Endothelial cell of umbilical vein (primary cell): ENCODE measurements at regions of chr11 and their contacts with region 1.

Region 1: GRCh38 chr11:69131644-69132300 is 24.0 kb upstream of the SMIM38 start:
- DNase-seq: peak; percentile 69
- H3K4me3 ChIP-seq: no peak overlapping the region
- H3K27ac ChIP-seq: no peak overlapping the region
- H3K4me1 ChIP-seq: no peaks in the 10 kb centered on the region
- H3K27me3 ChIP-seq: no peaks in the 10 kb centered on the region
- CTCF ChIP-seq: peak; percentile 65 to 89
- POLR2A ChIP-seq: no peak

Region 2: DNA sequence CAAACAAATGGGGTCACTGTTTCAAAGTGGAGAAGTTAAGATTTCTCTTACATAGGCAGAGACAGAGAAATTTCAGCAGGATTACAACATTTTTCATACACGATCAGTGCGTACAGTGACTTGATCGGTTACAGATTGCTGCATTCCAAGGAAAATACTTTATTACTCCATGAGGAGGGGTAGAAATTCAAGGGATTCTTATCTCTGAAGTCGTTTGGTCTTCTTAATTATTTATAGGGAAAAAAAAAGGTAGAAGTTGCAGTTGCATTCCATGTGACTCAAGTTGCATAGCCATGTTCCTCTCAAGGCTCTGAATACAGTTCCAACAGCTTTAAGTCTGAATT is 13.3 kb after region 1 on chr11:
- CTCF ChIA-PET with region 1: interaction called, 20 read pairs
- POLR2A ChIA-PET with region 1: no interaction called
- dilution Hi-C with region 1: no loop called
- intact Hi-C with region 1: no loop called
- DNase-seq: no peak
- H3K4me3 ChIP-seq: no peak overlapping the region
- H3K27ac ChIP-seq: no peak overlapping the region
- H3K4me1 ChIP-seq: no peaks in the 10 kb centered on the region
- H3K27me3 ChIP-seq: peaks cover 7 to 19% of the 10 kb centered on the region in 2 experiments
- CTCF ChIP-seq: no peak
- POLR2A ChIP-seq: no peak

Region 3: DNA sequence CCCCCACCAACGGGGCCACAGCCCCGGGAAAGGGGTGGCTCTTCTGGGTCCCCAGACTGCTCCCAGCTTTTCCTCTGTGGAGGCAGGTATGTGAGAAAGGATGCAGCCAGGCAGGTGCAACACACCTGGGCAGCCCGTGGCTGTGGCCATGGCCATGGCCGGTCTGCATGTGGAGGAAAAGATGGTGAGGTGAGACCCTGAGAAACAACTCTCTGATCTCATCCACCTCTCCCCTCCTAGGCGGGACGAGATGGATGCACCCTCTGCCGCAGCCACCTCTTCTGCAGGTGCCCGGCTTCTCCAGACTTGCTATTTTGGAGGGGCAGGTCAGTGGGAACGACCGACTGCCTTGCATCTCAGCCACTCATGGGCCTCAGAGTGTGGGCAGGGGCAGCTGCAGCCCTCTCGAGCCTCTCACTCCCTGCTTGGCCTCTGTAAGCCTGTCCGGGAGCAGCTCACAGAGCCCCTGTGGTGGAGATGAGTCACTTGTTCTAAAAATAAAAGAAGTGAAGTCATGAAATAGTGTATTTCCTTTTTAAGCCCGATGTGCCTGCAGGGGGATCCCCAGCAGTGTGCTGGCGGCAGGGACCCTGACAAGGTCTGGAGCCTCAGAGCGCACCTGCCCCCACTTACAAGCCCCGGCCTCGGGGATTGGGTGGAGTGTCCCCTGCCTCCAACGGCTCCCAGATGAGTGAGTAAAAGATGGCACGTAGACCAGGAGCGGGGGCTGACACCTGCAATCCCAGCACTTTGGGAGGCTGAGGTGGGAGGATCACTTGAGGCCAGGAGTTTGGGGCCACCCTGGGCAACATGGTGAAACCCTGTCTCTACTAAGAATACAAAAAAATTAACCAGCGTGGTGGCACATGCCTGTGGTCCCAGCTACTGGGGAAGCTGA is 34.7 kb after region 1 on chr11:
- CTCF ChIA-PET with region 1: interaction called, 11 read pairs
- POLR2A ChIA-PET with region 1: no interaction called
- dilution Hi-C with region 1: no loop called
- intact Hi-C with region 1: no loop called
- DNase-seq: peak; percentile 76
- H3K4me3 ChIP-seq: no peak overlapping the region
- H3K27ac ChIP-seq: no peak overlapping the region
- H3K4me1 ChIP-seq: peaks cover 7% of the 10 kb centered on the region
- H3K27me3 ChIP-seq: peaks cover 2 to 4% of the 10 kb centered on the region in 2 experiments
- CTCF ChIP-seq: peak in 1 of 2 donors; percentile 31
- POLR2A ChIP-seq: no peak

Region 4: GRCh38 chr11:69296890-69297786 is 165.4 kb after region 1 on chr11:
- CTCF ChIA-PET with region 1: interaction called, 30 read pairs
- POLR2A ChIA-PET with region 1: no interaction called
- dilution Hi-C with region 1: no loop called
- intact Hi-C with region 1: loop called (anchors 1 kb)
- DNase-seq: peak; percentile 98
- H3K4me3 ChIP-seq: peak overlapping the region in 1 of 3 experiments; percentile 29
- H3K27ac ChIP-seq: peak overlapping the region; percentile 98
- H3K4me1 ChIP-seq: peaks cover 63% of the 10 kb centered on the region
- H3K27me3 ChIP-seq: no peaks in the 10 kb centered on the region
- CTCF ChIP-seq: no peak
- POLR2A ChIP-seq: no peak

Region 5: GRCh38 chr11:69449320-69450063 is 317.7 kb after region 1 on chr11:
- CTCF ChIA-PET with region 1: interaction called, 10 read pairs
- POLR2A ChIA-PET with region 1: no interaction called
- dilution Hi-C with region 1: no loop called
- intact Hi-C with region 1: no loop called
- DNase-seq: peak; percentile 92
- H3K4me3 ChIP-seq: no peak overlapping the region
- H3K27ac ChIP-seq: peak overlapping the region; percentile 98
- H3K4me1 ChIP-seq: peaks cover 38% of the 10 kb centered on the region
- H3K27me3 ChIP-seq: no peaks in the 10 kb centered on the region
- CTCF ChIP-seq: no peak
- POLR2A ChIP-seq: peak; percentile 84

Region 6: GRCh38 chr11:69588270-69588669 is 456.5 kb after region 1 on chr11:
- CTCF ChIA-PET with region 1: interaction called, 11 read pairs
- POLR2A ChIA-PET with region 1: interaction called, 4 read pairs
- dilution Hi-C with region 1: no loop called
- intact Hi-C with region 1: no loop called
- DNase-seq: peak; percentile 50
- H3K4me3 ChIP-seq: no peak overlapping the region
- H3K27ac ChIP-seq: peak overlapping the region; percentile 49
- H3K4me1 ChIP-seq: peaks cover 13% of the 10 kb centered on the region
- H3K27me3 ChIP-seq: no peaks in the 10 kb centered on the region
- CTCF ChIP-seq: peak; percentile 15 to 32
- POLR2A ChIP-seq: no peak

Region 7: DNA sequence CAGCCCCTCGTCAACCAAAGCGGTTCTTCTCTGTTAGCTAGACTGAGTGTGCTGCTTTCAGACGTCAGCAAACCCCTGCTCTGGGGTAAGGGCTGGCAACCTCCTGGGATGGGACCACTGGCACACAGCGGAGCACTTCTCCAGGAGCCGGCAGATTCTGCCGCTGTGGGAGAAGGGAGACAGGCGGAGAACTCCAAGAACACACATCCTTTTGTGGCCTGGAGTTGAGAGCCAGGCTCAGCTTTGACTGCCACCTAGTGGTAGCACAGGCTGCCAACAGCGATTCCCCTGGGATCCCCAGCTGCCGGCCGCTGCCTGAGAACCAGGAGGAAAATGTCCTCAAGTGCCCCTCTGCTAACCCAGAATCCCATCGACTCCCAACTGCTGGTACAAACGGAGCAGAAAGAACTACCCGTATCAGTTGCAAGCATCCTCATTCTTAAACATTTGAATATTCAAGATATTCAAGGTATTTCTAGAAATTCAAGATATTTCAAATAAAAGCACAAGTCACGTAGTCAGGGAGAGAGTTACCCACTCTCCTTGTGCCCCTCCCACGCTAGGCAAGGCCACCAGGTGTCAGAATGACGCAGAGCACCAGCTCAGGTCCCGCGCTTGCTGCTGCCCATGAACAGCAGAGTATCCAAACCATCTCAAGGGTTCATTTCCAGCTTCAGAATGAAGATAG is 538.5 kb after region 1 on chr11:
- CTCF ChIA-PET with region 1: interaction called, 30 read pairs
- POLR2A ChIA-PET with region 1: no interaction called
- dilution Hi-C with region 1: no loop called
- intact Hi-C with region 1: loop called (anchors 1 kb)
- DNase-seq: peak; percentile 83
- H3K4me3 ChIP-seq: no peak overlapping the region
- H3K27ac ChIP-seq: no peak overlapping the region
- H3K4me1 ChIP-seq: peaks cover 9% of the 10 kb centered on the region
- H3K27me3 ChIP-seq: no peaks in the 10 kb centered on the region
- CTCF ChIP-seq: peak; percentile 94 to 97
- POLR2A ChIP-seq: peak; percentile 45